ENCODE measurements at regions of chr11 and their contacts with region 1.

Region 1: DNA sequence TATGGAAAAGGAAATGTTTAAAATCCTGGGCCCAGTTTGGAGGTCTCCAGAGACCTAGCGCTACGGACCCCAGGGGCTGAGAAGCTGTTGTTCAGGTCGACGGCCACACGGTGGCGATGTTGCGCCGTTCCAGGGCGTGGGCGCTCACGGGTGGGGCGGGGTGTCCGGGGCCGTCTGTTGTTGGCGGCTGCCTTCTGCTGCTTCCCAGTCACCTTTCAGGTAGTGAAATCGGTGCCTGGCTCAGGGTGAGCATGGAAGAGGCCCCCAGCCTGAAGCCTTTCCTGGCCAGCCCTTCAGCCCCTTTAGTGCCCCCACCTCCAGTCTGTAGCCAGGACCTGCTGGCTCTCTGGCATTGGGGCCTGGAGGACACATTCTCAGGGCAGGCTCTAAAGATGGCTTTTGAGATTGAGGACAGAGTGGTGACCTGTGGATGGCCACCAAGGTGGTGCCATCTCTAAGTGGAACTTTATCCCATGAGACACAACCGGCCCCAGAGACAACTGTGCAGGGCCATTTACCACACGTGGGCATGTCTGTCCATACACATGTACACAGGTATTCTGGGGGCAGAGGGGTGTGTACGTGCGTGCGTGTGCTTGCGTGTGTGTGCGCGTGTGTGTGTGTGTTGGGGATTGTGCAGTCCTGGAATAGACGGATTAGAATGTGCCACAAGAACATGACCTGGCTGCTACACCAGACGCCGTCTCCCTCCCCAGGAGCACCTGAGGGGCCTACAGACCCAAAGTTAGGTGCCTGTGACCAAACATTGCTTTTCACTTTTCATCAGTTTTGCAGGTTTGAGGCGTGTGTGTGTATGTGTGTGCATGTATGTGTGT is 53.8 kb downstream of the ST14 start:
- DNase-seq: peak; percentile 72 to 84
- ATAC-seq: peak; percentile 86 to 99 (median 99)
- H3K4me3 ChIP-seq: no peak overlapping the region
- H3K4me3 Mint-ChIP-seq: no peak overlapping the region
- H3K27ac ChIP-seq: no peak overlapping the region
- H3K27ac Mint-ChIP-seq: no peak overlapping the region
- H3K4me1 ChIP-seq: peaks cover 10% of the 10 kb centered on the region
- H3K4me1 Mint-ChIP-seq: no peaks in the 10 kb centered on the region
- H3K27me3 ChIP-seq: no peaks in the 10 kb centered on the region
- H3K27me3 Mint-ChIP-seq: peaks cover 0 to 6% of the 10 kb centered on the region in 2 donors
- CTCF ChIP-seq: peak; percentile 98

Region 2: DNA sequence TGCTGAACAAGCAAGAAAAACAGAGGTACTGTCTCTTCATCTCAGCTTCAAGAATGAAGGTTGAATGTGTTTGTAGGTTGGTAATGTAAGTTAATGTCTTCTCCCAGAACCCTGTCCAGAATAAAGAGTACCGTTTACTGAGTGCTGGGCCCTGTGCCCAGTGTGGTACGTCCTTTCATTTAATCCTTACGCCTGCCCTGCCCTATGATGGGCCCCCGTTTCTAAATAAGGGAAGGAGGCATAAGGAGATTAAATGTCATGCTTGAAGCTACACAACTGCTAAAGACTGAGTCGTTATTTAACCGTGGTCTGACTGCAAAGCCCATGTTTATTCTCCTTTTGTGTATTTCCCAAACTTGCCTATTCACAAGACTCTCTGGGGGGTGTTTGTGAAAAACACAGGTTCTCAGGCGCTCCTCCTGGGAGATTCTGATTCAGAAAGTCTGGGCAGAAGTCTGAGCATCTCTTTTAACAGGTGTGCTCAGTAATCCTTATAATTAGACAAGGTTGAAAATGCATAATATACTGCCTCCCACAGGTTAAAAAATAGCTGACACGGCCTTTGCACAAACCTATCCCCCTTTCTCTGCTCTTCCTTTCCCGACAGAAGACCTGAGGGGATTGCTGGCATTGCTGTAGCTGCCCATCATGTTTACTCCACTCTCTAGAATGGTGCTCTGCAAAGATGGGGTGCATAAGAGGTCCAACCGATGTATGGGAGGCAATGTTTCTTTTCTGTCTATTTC is 157.7 kb after region 1 on chr11:
- intact Hi-C with region 1: loop called (anchors 5 kb)
- DNase-seq: peak in 1 of 2 donors; percentile 25
- ATAC-seq: no peak
- H3K4me3 ChIP-seq: no peak overlapping the region
- H3K4me3 Mint-ChIP-seq: no peak overlapping the region
- H3K27ac ChIP-seq: no peak overlapping the region
- H3K27ac Mint-ChIP-seq: no peak overlapping the region
- H3K4me1 ChIP-seq: no peaks in the 10 kb centered on the region
- H3K4me1 Mint-ChIP-seq: peaks cover 5 to 8% of the 10 kb centered on the region in 2 donors
- H3K27me3 ChIP-seq: no peaks in the 10 kb centered on the region
- H3K27me3 Mint-ChIP-seq: no peaks in the 10 kb centered on the region
- CTCF ChIP-seq: no peak

Region 3: GRCh38 chr11:130861902-130862860 is 648.8 kb after region 1 on chr11:
- intact Hi-C with region 1: loop called (anchors 1 kb)
- DNase-seq: peak; percentile 84 to 95
- ATAC-seq: peak; percentile 90 to 99 (median 97)
- H3K4me3 ChIP-seq: no peak overlapping the region
- H3K4me3 Mint-ChIP-seq: no peak overlapping the region
- H3K27ac ChIP-seq: no peak overlapping the region
- H3K27ac Mint-ChIP-seq: no peak overlapping the region
- H3K4me1 ChIP-seq: peaks cover 4% of the 10 kb centered on the region
- H3K4me1 Mint-ChIP-seq: peaks cover 10 to 12% of the 10 kb centered on the region in 2 donors
- H3K27me3 ChIP-seq: no peaks in the 10 kb centered on the region
- H3K27me3 Mint-ChIP-seq: peaks cover 4 to 9% of the 10 kb centered on the region in 2 donors
- CTCF ChIP-seq: peak; percentile 100